ENCODE measurements at regions of chr20 and their contacts with region 1.

Region 1: DNA sequence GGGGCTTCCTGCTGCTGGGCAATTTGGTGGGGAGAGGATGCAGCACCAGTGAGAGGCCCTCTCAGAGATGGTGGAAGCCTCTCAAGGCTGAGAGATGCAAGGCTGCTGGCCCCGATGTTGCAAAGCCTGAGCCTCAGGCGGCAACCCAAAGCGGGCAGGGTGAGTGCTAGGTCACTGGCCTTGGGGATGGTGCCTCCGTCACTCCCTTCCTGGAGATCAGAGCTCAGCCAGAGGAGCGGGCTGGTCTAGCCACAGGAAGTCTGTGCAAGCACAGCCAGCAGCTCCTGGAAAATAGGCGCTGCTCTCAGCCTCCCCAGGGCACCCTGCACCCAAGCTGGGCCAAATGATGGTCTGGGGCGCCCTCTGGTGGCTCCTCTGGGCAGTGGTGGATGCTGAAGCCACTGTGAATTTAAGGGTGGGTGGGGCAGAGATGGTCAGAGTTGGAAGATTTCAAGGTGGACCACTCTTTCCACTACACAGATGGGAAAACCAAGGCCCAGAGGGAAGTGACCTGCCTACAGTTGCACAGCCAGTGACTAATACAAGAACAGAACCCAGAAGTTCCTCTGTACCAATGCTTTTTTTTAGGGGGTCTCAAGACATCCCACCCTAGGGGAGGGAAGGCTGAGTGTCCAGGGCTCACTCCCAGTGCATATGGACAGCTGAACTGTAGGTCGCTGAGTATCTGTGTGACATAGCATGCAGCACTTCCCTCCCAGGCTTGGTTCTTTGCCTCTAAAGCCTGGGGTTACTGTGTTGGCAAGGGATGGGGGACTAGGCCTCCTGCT is 20.8 kb downstream of the C20orf203 start:
- DNase-seq: peak; percentile 79
- ATAC-seq: peak; percentile 97
- H3K4me3 Mint-ChIP-seq: no peak overlapping the region
- H3K27ac Mint-ChIP-seq: no peak overlapping the region
- H3K4me1 Mint-ChIP-seq: peaks cover 8% of the 10 kb centered on the region
- H3K27me3 Mint-ChIP-seq: peaks cover 3% of the 10 kb centered on the region
- CTCF ChIP-seq: peak; percentile 74

Region 2: GRCh38 chr20:31851240-31851955 is 801.5 kb before region 1 on chr20:
- CTCF ChIA-PET with region 1: no interaction called
- POLR2A ChIA-PET with region 1: no interaction called
- intact Hi-C with region 1: loop called (anchors 2 kb)
- DNase-seq: no peak
- ATAC-seq: no peak
- H3K4me3 Mint-ChIP-seq: no peak overlapping the region
- H3K27ac Mint-ChIP-seq: no peak overlapping the region
- H3K4me1 Mint-ChIP-seq: no peaks in the 10 kb centered on the region
- H3K27me3 Mint-ChIP-seq: peaks cover 25% of the 10 kb centered on the region
- CTCF ChIP-seq: no peak

Region 3: DNA sequence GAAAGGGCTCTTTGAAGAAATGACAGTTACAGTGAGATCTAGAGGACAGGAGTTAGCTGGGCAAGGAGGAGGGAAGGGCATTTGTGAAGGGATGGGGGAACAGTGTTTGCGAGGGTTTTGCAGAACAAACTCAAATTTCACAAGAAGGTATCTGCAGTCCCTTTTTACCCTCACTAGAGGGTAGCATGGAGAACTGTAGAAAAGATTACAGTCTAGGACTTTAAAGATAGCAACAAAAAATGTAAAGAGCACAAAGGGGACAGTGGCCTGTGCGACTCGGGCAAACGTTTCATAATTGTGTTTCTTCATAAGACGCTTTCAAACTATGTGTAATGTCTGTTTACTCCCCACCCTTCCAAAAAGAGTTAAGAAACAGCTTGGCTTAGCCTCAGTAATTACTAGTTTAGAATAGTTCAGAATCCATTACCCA is 316.0 kb before region 1 on chr20:
- CTCF ChIA-PET with region 1: interaction called, 5 read pairs
- POLR2A ChIA-PET with region 1: no interaction called
- intact Hi-C with region 1: loop called (anchors 1 kb)
- DNase-seq: no peak
- ATAC-seq: peak; percentile 64
- H3K4me3 Mint-ChIP-seq: no peak overlapping the region
- H3K27ac Mint-ChIP-seq: peak overlapping the region; percentile 66
- H3K4me1 Mint-ChIP-seq: peaks cover 47% of the 10 kb centered on the region
- H3K27me3 Mint-ChIP-seq: no peaks in the 10 kb centered on the region
- CTCF ChIP-seq: peak; percentile 55

Region 4: DNA sequence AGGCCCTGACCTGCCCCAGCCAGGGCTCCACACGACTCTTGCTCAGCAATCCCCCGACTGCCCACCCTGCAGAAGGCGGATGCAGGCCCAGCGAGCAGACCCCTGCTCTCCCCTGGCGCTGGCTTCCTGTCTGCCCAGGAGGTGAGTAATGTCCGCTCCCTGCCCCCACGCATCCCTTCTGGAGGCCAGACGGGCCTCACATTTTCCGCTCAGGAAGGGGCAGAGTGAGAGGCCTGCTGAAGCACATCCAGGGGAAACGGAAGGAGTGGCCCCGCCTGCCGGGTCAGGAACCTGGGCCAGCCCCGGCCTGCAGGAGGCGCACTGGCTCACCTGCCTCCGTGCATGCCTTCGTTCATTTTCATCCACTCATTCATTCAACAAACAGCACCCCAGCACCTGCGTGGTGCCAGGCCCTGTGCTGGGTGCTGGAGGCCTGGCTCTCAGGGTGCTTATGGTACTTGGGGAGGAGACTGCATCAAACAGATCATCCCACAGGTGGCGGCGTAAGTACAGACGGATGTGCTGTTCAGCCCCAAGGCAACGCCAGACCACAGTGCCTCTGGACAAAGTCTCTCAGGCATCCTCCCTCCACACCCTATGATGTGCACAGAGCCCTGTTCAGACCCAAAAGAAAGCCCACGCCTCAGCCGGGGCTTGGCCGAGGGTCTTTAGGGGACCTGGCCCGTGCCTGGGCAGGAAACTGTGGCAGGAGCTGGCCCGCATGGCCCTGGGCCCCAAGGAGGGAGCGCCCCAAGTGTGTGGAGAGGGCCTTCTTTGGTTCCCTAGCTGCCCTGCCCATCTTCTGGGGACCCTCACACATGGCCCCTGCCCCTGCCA is 182.7 kb before region 1 on chr20:
- CTCF ChIA-PET with region 1: no interaction called
- POLR2A ChIA-PET with region 1: no interaction called
- intact Hi-C with region 1: loop called (anchors 2 kb)
- DNase-seq: no peak
- ATAC-seq: peak; percentile 28
- H3K4me3 Mint-ChIP-seq: no peak overlapping the region
- H3K27ac Mint-ChIP-seq: no peak overlapping the region
- H3K4me1 Mint-ChIP-seq: peaks cover 19% of the 10 kb centered on the region
- H3K27me3 Mint-ChIP-seq: no peaks in the 10 kb centered on the region
- CTCF ChIP-seq: no peak

Region 5: DNA sequence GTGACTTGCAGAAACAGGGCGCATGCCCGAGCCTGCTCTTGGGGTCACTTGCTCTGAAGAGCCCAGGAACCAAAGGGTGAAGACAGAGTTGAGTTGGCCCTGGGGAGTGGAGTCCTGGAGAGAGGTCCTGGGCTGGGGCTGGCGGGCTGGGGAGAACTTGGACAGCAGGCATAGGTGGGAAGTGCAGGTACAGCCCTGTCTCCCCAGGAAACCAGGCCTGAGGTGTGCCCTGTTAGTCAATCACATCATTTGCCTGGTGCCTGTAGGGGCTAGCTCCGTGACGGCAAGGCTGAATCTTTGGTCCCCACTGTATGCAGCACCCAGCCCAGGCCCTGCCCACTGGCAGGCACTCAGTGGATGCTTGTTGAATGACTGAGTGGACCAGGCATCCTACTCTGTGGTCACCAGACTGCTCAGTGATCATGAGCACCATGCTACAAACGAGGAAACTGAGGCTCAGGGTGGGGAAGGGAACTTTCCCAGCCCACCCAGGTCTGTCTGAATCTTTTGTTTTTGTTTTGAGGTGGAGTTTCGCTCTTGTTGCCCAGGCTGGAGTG is 52.2 kb before region 1 on chr20:
- CTCF ChIA-PET with region 1: no interaction called
- POLR2A ChIA-PET with region 1: no interaction called
- intact Hi-C with region 1: no loop called
- DNase-seq: no peak
- ATAC-seq: no peak
- H3K4me3 Mint-ChIP-seq: no peak overlapping the region
- H3K27ac Mint-ChIP-seq: no peak overlapping the region
- H3K4me1 Mint-ChIP-seq: peaks cover 27% of the 10 kb centered on the region
- H3K27me3 Mint-ChIP-seq: no peaks in the 10 kb centered on the region
- CTCF ChIP-seq: no peak

Region 6: GRCh38 chr20:33373735-33374605 is 721.0 kb after region 1 on chr20:
- CTCF ChIA-PET with region 1: no interaction called
- POLR2A ChIA-PET with region 1: no interaction called
- intact Hi-C with region 1: no loop called
- DNase-seq: no peak
- ATAC-seq: no peak
- H3K4me3 Mint-ChIP-seq: no peak overlapping the region
- H3K27ac Mint-ChIP-seq: no peak overlapping the region
- H3K4me1 Mint-ChIP-seq: peaks cover 2% of the 10 kb centered on the region
- H3K27me3 Mint-ChIP-seq: no peaks in the 10 kb centered on the region
- CTCF ChIP-seq: no peak

Measured in activated B cell treated with CpG ODN at 0.5 μM for 24 hours (primary cell).